ENCODE measurements at regions of chr4 and their contacts with region 1.

Region 1: GRCh38 chr4:41325901-41326300 is 69.2 kb downstream of the UCHL1 start:
- DNase-seq: no peak
- H3K4me3 ChIP-seq: no peak overlapping the region
- H3K27ac ChIP-seq: no peak overlapping the region
- H3K4me1 ChIP-seq: no peaks in the 10 kb centered on the region
- H3K27me3 ChIP-seq: no peaks in the 10 kb centered on the region
- CTCF ChIP-seq: no peak
- EP300 ChIP-seq: no peak
- POLR2A ChIP-seq: no peak

Region 2: GRCh38 chr4:41268022-41268421 is 57.9 kb before region 1 on chr4:
- intact Hi-C with region 1: no loop called
- DNase-seq: no peak
- H3K4me3 ChIP-seq: no peak overlapping the region
- H3K27ac ChIP-seq: no peak overlapping the region
- H3K4me1 ChIP-seq: no peaks in the 10 kb centered on the region
- H3K27me3 ChIP-seq: no peaks in the 10 kb centered on the region
- CTCF ChIP-seq: no peak
- EP300 ChIP-seq: no peak
- POLR2A ChIP-seq: no peak

Region 3: DNA sequence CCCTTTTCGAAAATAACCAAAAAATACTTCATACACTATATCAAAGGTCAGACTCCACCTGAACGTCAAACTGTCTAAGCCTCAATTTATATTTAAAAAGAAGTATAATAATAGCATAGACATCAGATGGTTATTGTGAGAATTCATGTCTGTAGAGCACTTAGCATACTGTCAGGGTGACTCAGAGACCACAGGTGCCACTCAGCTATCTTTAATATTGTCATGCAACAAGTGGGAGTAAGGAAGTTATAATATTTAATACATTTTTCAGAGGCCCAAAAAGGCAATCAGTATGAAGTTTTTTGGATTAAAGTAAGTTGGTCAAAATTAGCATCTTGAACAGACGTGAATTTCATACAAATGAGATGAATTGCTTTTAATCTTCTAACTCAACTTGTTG is 329.3 kb after region 1 on chr4:
- intact Hi-C with region 1: loop called in 1 of 4 experiments (anchors 1 kb)
- DNase-seq: no peak
- H3K4me3 ChIP-seq: no peak overlapping the region
- H3K27ac ChIP-seq: no peak overlapping the region
- H3K4me1 ChIP-seq: no peaks in the 10 kb centered on the region
- H3K27me3 ChIP-seq: no peaks in the 10 kb centered on the region
- CTCF ChIP-seq: no peak
- EP300 ChIP-seq: no peak
- POLR2A ChIP-seq: no peak